Activated T-helper 1 cell treated with anti-CD3 and anti-CD28 coated beads, Interleukin-12 subunit alpha, Interleukin-12 subunit beta, Interleukin-2, Interleukin-4 antibody, amounts not matched to agents 30 ng/mL and 10 ng/mL and 1 ng/mL, durations not matched to agents 14 hours and 24 hours and 36 hours (primary cell): ENCODE measurements at regions of chr6 and their contacts with region 1.

Region 1: DNA sequence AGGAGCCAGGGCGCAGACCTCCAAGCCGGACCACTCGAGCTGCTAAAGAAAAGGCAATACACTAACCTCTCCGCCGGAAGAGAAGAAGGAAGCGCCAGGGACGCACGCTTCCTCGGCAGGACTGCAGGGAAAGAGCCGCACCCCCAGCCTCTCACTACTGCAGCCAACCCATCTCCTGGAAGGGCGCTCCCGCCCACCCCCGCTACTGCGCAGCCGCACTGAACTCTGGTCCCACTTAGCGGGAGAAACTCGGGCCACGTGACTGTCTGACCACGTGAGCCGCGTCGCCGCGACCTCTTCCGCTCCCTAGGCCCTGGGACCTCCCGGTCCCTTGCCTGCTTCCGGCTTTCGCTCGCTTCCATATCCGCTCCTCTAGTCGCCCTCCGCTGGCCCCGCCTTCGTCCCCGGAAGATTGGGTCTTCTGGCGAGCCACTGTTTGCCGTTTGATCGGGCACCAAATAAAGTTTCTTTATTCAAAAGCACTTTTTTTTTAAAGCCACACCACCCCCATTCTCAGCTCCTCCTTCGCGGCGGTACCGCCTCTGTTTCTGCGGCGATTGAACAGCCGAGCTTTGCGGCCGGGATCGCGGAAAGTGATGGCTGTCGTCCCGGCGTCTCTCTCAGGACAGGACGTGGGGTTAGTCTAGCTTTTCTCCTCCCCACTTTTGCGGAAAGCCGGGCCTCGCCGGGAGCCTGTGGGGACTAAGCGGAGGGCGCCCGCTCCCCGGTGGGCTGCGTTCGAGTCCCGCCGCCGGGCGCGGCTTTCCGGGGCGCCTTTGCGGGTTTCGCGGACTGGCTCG is at the start of gene RMND1:
- DNase-seq: peak; percentile 99
- H3K4me3 Mint-ChIP-seq: peak within 1 kb of the TSS; percentile 97
- H3K27ac Mint-ChIP-seq: peak within 1 kb of the TSS; percentile 90
- H3K4me1 Mint-ChIP-seq: peaks cover 29% of the 10 kb centered on the region
- H3K27me3 Mint-ChIP-seq: peaks cover 4% of the 10 kb centered on the region
- total RNA-seq, gene RMND1: 20.0 and 20.5 TPM in 2 replicates

Region 2: DNA sequence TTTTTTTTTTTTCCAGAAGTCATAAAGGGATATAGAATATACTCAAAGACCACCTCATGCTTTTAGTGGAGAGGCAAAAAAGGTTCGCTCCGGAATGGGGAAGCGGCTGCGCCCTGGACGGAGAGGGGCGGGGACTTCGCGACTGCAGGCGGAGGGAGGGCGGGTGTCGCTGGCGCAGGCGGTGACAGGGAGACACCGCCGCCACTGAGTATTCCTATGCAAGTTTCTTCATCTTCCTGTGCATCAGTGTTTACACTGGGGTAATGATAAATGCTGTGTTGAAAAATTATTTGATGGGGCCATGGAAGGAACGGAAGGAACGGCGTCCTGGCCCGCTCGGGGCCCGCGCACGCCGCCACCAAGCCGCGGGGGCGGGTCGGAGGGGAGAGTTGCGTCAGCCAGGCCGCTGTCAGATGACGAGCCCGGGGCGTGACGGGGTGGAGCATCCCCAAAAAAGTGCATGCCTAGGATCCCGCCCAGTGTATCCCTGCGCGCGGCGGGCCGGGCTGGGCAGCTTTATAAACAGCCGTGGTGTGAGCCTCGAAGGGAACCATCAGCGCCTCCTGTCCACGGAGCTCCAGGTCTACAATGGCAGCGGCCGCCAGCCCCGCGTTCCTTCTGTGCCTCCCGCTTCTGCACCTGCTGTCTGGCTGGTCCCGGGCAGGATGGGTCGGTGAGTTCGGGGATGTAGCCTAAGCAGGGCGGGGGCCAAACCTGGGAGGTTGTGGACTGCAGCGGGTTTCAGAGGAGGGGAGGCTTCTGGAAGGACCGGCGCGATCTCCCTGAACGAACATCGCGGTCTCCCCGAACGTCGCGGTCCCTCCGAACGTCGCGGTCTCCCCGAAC is 1488.5 kb before region 1 on chr6 and contains the start of gene ULBP1:
- intact Hi-C with region 1: loop called (anchors 10 kb)
- DNase-seq: peak; percentile 80
- H3K4me3 Mint-ChIP-seq: peak within 1 kb of the TSS; percentile 91
- H3K27ac Mint-ChIP-seq: peak within 1 kb of the TSS; percentile 90
- H3K4me1 Mint-ChIP-seq: peaks cover 33% of the 10 kb centered on the region
- H3K27me3 Mint-ChIP-seq: peaks cover 75% of the 10 kb centered on the region
- total RNA-seq, gene ULBP1: 0.91 and 0.99 TPM in 2 replicates

Region 3: GRCh38 chr6:150981095-150981494 is 471.1 kb before region 1 on chr6:
- intact Hi-C with region 1: loop called (anchors 10 kb)
- DNase-seq: no peak
- H3K4me3 Mint-ChIP-seq: no peak overlapping the region
- H3K27ac Mint-ChIP-seq: no peak overlapping the region
- H3K4me1 Mint-ChIP-seq: peaks cover 10% of the 10 kb centered on the region
- H3K27me3 Mint-ChIP-seq: no peaks in the 10 kb centered on the region

Region 4: GRCh38 chr6:151475653-151476523 is 23.7 kb after region 1 on chr6:
- intact Hi-C with region 1: loop called (anchors 1 kb)
- DNase-seq: no peak
- H3K4me3 Mint-ChIP-seq: no peak overlapping the region
- H3K27ac Mint-ChIP-seq: no peak overlapping the region
- H3K4me1 Mint-ChIP-seq: peaks cover 7% of the 10 kb centered on the region
- H3K27me3 Mint-ChIP-seq: no peaks in the 10 kb centered on the region

Region 5: DNA sequence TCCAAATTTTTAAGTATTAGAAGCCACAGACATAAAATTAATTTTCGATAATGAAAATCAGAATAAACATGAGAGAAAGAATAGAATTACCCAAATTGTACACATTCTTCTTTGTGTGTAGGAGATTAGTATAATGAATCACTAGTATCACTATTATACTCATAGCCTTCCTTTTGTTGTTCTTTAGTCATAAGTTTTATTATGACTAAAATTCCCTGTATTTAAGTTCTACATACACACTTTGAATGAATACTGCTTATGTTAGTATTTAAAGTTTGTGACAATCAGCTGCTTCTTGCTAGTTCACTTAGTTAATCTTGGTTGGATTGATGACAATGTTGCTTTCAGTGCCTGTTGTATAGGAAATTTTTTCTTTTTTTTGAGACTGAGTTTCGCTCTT is 114.4 kb after region 1 on chr6:
- intact Hi-C with region 1: no loop called
- DNase-seq: no peak
- H3K4me3 Mint-ChIP-seq: no peak overlapping the region
- H3K27ac Mint-ChIP-seq: no peak overlapping the region
- H3K4me1 Mint-ChIP-seq: no peaks in the 10 kb centered on the region
- H3K27me3 Mint-ChIP-seq: no peaks in the 10 kb centered on the region

Region 6: GRCh38 chr6:151723152-151723551 is 271.0 kb after region 1 on chr6:
- intact Hi-C with region 1: loop called (anchors 1 kb)
- DNase-seq: peak; percentile 34
- H3K4me3 Mint-ChIP-seq: no peak overlapping the region
- H3K27ac Mint-ChIP-seq: peak overlapping the region; percentile 32
- H3K4me1 Mint-ChIP-seq: peaks cover 52% of the 10 kb centered on the region
- H3K27me3 Mint-ChIP-seq: peaks cover 2% of the 10 kb centered on the region

Region 7: GRCh38 chr6:152301764-152302568 is 849.8 kb after region 1 on chr6:
- intact Hi-C with region 1: loop called (anchors 1 kb)
- DNase-seq: peak; percentile 88
- H3K4me3 Mint-ChIP-seq: peak overlapping the region; percentile 98
- H3K27ac Mint-ChIP-seq: peak overlapping the region; percentile 99
- H3K4me1 Mint-ChIP-seq: peaks cover 41% of the 10 kb centered on the region
- H3K27me3 Mint-ChIP-seq: peaks cover 4% of the 10 kb centered on the region

Region 8: GRCh38 chr6:153002607-153003365 is 1550.6 kb after region 1 on chr6 and contains the start of gene MTRF1L:
- intact Hi-C with region 1: loop called (anchors 1 kb)
- DNase-seq: peak; percentile 81
- H3K4me3 Mint-ChIP-seq: peak within 1 kb of the TSS; percentile 98
- H3K27ac Mint-ChIP-seq: peak within 1 kb of the TSS; percentile 91
- H3K4me1 Mint-ChIP-seq: peaks cover 51% of the 10 kb centered on the region
- H3K27me3 Mint-ChIP-seq: peaks cover 10% of the 10 kb centered on the region
- total RNA-seq, gene MTRF1L: 22.7 and 23.2 TPM in 2 replicates